Posterior cingulate gyrus (tissue), 11 donors: ENCODE measurements at regions of chr15 and their contacts with region 1.

Region 1: GRCh38 chr15:85831415-85832113 is 36.8 kb upstream of the KLHL25 start:
- DNase-seq: peak; percentile 39 to 95 (median 72)

Region 2: DNA sequence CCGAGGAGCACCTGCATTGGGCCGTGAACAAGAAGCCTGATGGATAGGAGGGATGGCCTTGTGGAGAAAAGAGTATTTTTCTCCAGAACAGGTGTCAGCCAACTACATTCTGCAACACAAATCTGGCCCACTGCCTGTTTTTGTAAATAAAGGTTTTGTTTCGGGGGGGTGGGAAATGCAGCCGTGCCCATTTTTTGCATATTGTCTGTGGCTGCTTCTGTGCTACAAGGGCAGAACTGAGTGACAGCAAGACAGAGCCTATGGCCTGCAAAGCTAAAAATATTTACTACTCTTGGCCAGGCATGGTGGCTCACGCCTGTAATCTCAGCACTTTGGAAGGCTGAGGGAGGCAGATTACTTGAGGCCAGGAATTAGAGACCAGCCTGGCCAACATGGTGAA is 547.1 kb before region 1 on chr15:
- intact Hi-C with region 1: no loop called
- DNase-seq: no peak

Region 3: GRCh38 chr15:85730001-85730820 is 101.4 kb before region 1 on chr15:
- intact Hi-C with region 1: loop called (anchors 1 kb)
- DNase-seq: no peak

Region 4: GRCh38 chr15:85749261-85750151 is 82.1 kb before region 1 on chr15:
- intact Hi-C with region 1: loop called (anchors 5 kb)
- DNase-seq: peak in 5 of 10 donors; percentile 13 to 91 (median 58)

Region 5: GRCh38 chr15:85794603-85795336 is 36.8 kb before region 1 on chr15 and contains the start of gene KLHL25:
- intact Hi-C with region 1: loop called (anchors 2 kb)
- DNase-seq: peak; percentile 89 to 99 (median 95)